PC-3 (cell line): ENCODE measurements at regions of chr21 and their contacts with region 1.

Region 1: GRCh38 chr21:20451046-20451445 is 547.2 kb upstream of the NCAM2 start:
- DNase-seq: peak; percentile 81
- ATAC-seq: peak; percentile 100
- H3K4me3 ChIP-seq: no peak overlapping the region
- H3K27ac ChIP-seq: no peak overlapping the region
- H3K4me1 ChIP-seq: peaks cover 10% of the 10 kb centered on the region; the same call in 1 of the 2 replicates
- H3K27me3 ChIP-seq: no peaks in the 10 kb centered on the region
- CTCF ChIP-seq: no peak

Region 2: GRCh38 chr21:20647607-20648006 is 196.6 kb after region 1 on chr21:
- CTCF ChIA-PET with region 1: no interaction called
- POLR2A ChIA-PET with region 1: no interaction called
- intact Hi-C with region 1: loop called (anchors 2 kb)
- DNase-seq: peak; percentile 73
- ATAC-seq: peak; percentile 60
- H3K4me3 ChIP-seq: no peak overlapping the region
- H3K27ac ChIP-seq: peak overlapping the region; percentile 20
- H3K4me1 ChIP-seq: peaks cover 29% of the 10 kb centered on the region
- H3K27me3 ChIP-seq: no peaks in the 10 kb centered on the region
- CTCF ChIP-seq: no peak

Region 3: GRCh38 chr21:20882462-20883407 is 431.7 kb after region 1 on chr21:
- CTCF ChIA-PET with region 1: no interaction called
- POLR2A ChIA-PET with region 1: no interaction called
- intact Hi-C with region 1: loop called (anchors 2 kb)
- DNase-seq: peak; percentile 64
- ATAC-seq: peak; percentile 48
- H3K4me3 ChIP-seq: no peak overlapping the region
- H3K27ac ChIP-seq: no peak overlapping the region
- H3K4me1 ChIP-seq: no peaks in the 10 kb centered on the region
- H3K27me3 ChIP-seq: no peaks in the 10 kb centered on the region
- CTCF ChIP-seq: peak; percentile 82